Left ventricle myocardium inferior (tissue), 1 donor: ENCODE measurements at regions of chr1 and their contacts with region 1.

Region 1: GRCh38 chr1:165717918-165718515 is 19.7 kb upstream of the ALDH9A1 start:
- DNase-seq: no peak
- H3K4me3 ChIP-seq: no peak overlapping the region
- H3K27ac ChIP-seq: no peak overlapping the region
- H3K4me1 ChIP-seq: no peaks in the 10 kb centered on the region
- H3K27me3 ChIP-seq: no peaks in the 10 kb centered on the region
- CTCF ChIP-seq: peak; percentile 69

Region 2: GRCh38 chr1:165914136-165914798 is 196.2 kb after region 1 on chr1:
- intact Hi-C with region 1: loop called (anchors 5 kb)
- DNase-seq: no peak
- H3K4me3 ChIP-seq: no peak overlapping the region
- H3K27ac ChIP-seq: no peak overlapping the region
- H3K4me1 ChIP-seq: peaks cover 19% of the 10 kb centered on the region
- H3K27me3 ChIP-seq: no peaks in the 10 kb centered on the region
- CTCF ChIP-seq: peak; percentile 91